Right ventricle myocardium inferior (tissue), 1 donor: ENCODE measurements at regions of chr4 and their contacts with region 1.

Region 1: DNA sequence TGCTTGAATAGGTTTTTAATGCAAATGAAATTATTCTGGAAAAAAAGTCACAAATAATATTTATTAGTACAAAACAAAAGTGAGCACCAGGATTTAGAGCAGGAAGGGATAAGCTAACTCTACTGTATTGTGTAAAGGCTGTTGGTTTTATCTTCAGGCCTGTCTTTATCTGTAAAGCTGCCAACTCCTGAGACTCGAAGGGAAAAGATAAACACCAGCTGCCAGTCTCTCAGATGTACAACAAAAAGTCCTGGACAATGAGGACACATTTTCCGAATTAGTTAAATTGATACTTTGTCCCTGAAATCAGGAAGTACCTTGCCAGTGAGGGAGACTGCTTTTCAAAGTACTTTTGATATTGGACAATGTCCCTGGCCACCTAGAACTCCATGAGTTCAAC is 8.8 kb downstream of the DDX60 start:
- DNase-seq: no peak
- ATAC-seq: peak; percentile 57

Region 2: DNA sequence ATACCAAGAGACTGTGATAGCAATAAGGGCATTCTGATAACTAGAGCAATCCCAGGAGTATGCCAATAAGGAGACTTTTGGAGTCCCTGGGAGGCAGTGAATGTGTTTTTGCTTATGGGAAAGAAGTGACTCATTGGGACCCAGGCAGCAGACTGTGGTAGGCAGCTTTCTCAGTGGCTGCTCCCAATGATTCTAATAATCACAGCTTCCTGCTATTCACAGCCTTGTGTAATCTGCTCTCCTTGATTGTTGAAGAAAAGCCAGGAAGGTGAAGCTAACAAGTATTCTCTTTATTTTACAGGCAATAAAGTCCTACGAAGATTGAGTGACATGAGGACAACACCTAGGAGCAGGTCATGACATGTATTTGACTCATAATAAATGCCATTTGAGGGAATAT is 79.1 kb after region 1 on chr4:
- intact Hi-C with region 1: loop called (anchors 5 kb)
- DNase-seq: no peak
- ATAC-seq: no peak

Region 3: DNA sequence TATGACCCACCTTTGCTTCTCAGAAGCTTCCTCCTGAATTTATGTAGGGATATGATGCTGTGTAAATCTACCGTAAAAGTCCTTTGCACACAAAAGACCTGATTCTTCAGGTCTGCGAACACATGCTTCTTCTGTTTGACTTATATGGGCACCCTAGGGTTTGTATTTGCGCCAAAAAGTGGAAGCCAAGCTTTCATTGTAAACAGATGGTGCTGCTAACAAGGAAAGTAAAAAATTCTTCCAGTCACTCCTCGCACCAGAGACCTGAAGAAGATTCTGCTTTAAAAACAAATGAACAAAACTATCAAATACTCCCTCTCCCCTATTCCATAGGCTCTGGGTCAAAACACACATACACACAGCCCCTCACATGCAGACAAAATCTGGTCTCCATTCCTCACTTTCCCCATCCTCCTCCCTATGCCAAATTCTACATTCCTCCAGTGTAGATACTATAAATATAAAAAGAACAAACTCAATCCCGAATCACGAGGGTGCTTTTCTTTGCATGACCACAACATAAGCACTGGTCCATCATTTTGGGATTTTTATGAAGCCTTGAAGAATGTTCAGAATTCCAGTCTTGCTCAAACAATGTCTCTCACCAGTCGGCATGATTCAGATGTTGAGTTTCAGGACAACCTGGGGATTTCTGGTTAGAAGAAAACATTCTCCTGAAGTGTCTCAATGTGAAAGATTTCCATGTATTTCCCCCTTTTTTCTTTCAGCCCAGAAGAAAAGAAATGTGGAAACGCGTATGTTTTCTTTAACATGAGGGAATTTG is 312.2 kb after region 1 on chr4:
- intact Hi-C with region 1: no loop called
- DNase-seq: no peak
- ATAC-seq: no peak